ENCODE measurements at regions of chr3 and their contacts with region 1.

Region 1: DNA sequence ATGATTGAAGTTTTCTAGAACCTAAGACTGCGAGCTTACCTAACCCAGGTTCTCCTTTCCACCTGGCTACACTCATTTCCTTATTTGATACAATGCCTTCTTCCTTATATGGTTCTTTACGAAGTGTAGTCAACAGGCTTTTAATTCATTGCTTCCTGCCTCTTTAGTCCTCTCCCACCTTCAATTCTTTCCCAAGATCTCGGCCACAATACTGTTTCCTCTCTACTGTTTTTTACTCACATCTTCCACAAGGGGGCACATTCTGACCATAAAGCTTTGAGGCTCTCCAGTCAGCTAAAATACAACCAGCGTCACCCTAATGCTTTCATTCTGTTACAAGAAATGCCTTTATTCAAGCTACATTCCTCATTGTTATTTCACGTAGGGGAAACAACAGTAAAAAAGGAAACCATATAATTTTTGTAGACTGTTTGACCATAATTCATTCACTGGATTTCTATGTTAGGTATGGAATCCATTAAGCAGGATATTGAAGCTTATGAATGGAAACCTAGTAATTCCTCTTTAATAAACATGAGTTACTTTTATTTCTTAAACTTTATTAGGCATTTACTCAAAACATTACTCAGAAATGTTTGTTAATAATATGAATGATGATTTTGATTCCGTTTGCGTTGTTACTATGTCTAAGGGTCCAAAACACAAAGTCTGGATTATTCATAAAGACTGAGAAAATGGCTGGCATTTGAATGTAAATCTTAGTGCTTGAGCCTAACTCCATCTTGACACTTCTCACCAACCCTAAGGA is 29.5 kb upstream of the VEPH1 start:
- DNase-seq: no peak
- ATAC-seq: peak; percentile 90

Region 2: DNA sequence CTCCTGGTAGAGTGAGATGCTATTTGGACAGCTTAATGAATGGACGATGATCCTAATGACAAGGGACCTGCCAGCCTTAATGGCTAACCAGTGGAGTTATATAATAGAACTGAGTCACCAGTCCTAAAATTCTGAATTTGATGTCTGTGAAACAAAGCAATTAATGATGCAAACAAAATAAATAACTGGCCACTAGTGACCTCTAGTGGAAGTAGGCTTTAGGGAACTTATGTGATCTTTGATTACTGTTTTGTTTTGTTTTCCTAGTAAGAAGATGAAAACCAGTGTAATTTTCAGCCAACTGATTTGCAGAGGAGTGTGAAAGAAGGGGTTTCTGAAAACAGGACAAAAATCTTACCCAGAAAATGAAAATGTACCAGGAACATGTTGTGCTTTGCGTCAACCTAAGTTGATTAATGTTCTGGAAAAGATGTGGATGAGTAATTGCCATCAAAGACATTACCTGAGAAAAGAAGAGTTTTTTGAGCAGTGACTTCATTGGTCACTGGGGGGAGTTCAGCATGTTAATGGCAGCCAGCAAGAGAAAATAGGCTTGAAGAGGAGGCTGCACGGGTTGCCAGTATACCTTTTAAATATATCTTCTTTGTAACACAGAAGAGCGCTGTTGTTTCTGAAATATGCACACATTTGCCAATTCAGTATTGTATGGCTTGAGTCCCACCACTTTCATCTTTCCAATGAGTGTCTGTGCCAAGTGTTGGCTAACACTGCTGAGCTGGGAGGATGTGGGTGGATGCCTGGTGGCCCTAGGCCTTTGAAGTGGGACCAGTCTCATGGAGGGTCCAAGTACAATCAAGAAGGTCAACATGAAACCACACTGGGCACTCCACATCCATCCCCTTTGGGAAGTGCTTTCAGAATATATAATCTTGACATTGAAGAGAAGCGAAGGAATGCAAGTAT is 38.8 kb before region 1 on chr3:
- intact Hi-C with region 1: no loop called
- DNase-seq: no peak
- ATAC-seq: no peak

Region 3: DNA sequence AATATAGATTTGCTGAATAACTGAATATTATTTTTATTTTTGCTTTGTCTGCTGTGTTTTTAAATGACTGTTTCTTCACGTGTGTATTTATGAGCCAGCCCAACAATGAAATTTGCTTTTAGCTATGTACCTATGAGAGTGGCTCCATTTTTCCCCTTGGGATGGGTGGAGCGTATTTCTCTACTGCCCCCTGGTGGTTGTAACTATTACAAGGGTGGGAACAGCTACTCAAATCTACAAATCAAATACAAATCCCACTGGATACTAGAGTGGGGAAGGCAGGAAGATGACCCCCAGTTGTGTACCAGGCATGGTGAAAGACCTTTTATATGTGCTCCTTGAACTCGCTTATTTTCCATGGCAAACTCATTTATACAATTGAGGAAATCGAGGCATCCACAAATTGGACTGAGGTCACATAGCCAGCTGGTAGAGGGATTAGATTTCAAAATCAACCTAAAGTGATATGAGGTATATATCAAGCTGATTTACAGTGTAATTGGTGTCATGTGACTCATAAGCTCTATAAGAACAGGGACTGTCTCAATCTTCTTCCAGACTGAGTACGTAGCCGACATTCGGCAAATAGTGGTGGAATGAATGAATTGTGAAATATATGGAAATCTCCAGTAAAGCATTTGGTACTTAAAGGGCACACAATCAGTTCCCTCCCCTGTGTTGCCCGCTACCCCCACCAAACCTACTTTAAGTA is 40.0 kb after region 1 on chr3:
- intact Hi-C with region 1: loop called in 1 of 2 experiments (anchors 2 kb)
- DNase-seq: no peak
- ATAC-seq: peak; percentile 64